Activated T-helper 1 cell treated with anti-CD3 and anti-CD28 coated beads, Interleukin-12 subunit alpha, Interleukin-12 subunit beta, Interleukin-2, Interleukin-4 antibody, amounts not matched to agents 30 ng/mL and 10 ng/mL and 1 ng/mL, durations not matched to agents 14 hours and 24 hours and 36 hours (primary cell): ENCODE measurements at regions of chr2 and their contacts with region 1.

Region 1: DNA sequence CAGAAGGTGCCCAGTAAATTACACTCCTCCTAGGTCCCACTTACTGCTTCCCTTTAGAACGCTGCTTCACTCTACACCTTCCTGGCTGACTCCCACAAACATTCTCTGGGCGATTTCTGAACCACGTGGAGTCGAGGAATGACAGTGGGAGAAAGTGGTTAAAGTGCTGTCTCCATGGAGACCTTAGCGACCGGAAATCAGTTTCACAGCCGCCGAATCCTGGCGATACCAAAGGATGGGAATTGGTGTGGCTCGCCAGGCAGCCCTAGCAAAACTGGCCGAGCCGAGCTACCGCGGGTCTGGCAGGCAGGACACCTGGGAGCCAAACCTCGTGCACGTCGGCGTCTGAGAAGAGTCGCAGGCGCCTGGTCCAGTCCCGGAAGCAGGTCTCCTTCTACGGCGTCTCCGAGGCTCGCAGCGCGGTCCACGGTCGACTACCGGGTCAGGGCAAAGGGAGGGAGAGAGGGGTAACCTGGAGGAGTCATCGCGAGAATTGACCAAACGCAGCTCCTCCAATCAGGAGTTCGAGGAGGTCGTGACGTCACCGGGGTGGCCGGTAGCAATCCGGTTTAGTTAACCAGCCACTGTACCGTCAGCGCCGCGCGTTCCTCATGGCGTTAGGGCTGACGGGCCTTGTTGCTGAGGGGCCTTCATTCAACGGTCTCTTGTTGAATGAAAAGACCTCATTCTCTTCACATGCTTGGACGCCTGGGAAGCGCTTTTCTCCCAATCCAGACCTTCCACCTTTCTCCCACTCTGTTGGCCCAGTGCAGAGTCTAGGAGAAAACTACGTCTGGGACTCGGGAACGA is at the start of gene THADA:
- DNase-seq: peak; percentile 97
- H3K4me3 Mint-ChIP-seq: peak within 1 kb of the TSS; percentile 96
- H3K27ac Mint-ChIP-seq: peak within 1 kb of the TSS; percentile 98
- H3K4me1 Mint-ChIP-seq: peaks cover 42% of the 10 kb centered on the region
- H3K27me3 Mint-ChIP-seq: peaks cover 2% of the 10 kb centered on the region
- total RNA-seq, gene THADA: 49.8 and 51.7 TPM in 2 replicates

Region 2: GRCh38 chr2:43255296-43255910 is 340.4 kb before region 1 on chr2:
- intact Hi-C with region 1: no loop called
- DNase-seq: no peak
- H3K4me3 Mint-ChIP-seq: no peak overlapping the region
- H3K27ac Mint-ChIP-seq: no peak overlapping the region
- H3K4me1 Mint-ChIP-seq: no peaks in the 10 kb centered on the region
- H3K27me3 Mint-ChIP-seq: no peaks in the 10 kb centered on the region

Region 3: DNA sequence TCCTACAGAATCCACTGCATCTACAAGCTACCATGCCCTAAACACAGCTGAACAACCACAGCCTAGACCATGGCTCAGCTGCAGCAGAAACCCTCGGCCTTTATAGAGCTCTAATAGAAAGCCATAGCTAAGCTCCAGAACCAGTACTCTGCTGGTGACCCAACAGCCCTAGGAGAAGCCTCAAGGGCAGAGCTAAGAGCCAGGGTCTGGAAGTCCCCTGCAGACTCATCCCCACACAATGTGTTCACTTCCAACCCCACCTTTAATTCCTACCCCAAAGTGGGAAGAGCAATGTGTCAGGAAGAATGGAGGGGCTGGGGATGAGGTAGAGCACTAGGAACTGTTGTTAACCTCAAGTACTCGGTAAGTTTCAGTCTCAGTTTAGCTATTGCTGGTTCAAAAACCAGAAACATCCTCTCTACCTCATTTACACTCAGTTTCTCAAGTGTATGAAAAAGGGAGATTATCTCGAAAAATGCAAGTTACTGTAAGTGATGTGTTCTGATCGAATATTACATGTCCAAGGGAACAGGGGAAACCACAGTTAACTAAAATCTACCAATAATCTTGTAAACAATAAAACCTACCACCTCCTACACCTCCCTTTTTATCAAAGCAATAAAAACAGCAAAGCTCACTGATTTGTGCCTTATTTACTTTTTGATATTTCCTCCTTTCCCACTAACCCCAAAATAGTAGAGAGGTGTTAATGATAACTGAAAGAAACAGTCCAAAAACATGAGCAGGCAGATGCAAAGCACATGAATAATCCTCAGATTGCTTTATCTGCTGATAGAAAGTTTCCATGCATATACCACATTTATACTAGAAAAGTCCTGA is 36.2 kb before region 1 on chr2:
- intact Hi-C with region 1: loop called (anchors 1 kb)
- DNase-seq: no peak
- H3K4me3 Mint-ChIP-seq: peak overlapping the region; percentile 41
- H3K27ac Mint-ChIP-seq: peak overlapping the region; percentile 94
- H3K4me1 Mint-ChIP-seq: peaks cover 71% of the 10 kb centered on the region
- H3K27me3 Mint-ChIP-seq: no peaks in the 10 kb centered on the region

Region 4: DNA sequence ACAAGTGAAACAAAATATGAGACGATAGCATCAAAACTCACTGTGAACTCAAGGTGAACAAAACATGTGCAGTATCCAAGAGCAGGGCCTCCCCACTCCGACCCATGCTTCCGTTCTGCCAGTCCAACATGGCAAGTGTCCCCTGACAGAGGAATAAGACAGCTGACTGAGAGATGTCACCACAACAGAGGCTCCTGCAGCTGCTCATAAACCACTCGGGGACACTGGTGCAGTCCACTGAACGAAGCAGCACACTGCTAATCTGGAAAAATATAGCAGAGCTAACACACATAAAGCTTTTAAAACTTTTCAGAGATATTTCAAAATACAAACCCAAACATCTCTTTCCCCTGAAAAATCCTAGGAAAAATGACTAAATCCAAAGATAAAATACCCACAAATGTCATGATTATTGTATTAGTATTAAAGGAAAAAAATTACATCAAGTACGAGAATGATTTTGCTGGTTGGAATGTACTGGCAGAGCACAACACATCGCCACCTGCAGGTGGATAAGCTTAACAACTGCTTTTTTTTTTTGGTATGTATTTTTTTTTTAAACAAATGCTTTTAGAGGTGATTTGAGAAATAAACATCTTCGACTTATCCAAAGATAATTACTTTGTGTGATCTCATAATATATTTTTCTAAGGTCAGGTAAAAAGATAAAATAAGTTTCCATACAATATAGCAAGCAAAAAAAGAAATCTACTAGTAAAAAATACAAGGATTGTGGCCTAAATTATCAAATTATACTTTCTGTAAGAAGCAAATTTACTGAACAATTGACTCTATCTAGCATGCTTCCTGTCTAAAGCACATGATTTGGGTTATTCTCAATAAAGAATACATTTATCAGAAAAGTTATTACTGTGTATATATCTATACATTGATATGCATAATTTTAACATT is 18.6 kb before region 1 on chr2:
- intact Hi-C with region 1: loop called (anchors 1 kb)
- DNase-seq: no peak
- H3K4me3 Mint-ChIP-seq: no peak overlapping the region
- H3K27ac Mint-ChIP-seq: no peak overlapping the region
- H3K4me1 Mint-ChIP-seq: peaks cover 27% of the 10 kb centered on the region
- H3K27me3 Mint-ChIP-seq: no peaks in the 10 kb centered on the region

Region 5: GRCh38 chr2:43637030-43637803 is 41.4 kb after region 1 on chr2 and contains the start of gene PLEKHH2:
- intact Hi-C with region 1: loop called (anchors 1 kb)
- DNase-seq: peak; percentile 81
- H3K4me3 Mint-ChIP-seq: peak within 1 kb of the TSS; percentile 84
- H3K27ac Mint-ChIP-seq: no peak within 1 kb of the TSS
- H3K4me1 Mint-ChIP-seq: peaks cover 6% of the 10 kb centered on the region
- H3K27me3 Mint-ChIP-seq: peaks cover 45% of the 10 kb centered on the region
- total RNA-seq, gene PLEKHH2: 0.12 and 0.13 TPM in 2 replicates

Region 6: DNA sequence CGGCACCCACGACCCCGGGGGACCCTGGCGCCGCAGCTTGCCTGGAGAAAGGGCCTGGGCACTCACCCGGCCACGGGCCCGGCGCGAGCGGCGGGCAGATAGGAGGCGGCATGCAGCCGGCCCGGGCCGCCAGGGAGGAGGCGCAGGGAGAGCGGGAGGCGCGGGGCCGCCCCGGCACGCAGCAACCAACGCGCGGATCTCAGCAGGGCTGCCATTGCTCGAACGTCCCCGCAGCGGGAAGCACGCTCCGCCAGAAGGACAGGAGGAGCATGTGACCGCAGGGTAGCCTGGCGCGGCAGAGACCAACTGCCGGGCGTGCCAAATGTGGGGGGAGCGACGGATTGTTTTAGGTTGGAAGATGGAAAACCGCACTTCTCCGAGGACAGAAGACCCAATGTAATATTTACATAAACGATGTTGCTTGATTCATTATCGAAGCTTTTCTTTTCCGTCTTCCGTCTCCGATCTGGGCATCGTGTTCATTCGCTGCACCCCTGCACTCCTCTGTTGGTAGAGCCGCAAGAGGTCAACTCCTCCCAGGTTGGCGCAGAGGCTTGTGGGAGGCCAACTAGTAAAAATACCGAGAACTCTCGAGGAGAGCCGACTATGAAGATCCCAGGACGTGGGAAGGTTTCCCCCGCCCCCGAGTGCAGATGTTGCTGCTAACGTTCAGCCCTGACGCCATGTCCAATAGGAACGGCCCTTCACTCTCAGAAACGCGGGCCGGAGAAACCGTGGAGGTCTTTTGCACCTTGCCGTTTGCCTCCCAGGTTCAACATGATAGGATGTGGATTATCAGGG is 400.1 kb after region 1 on chr2 and contains the start of gene LRPPRC:
- intact Hi-C with region 1: loop called (anchors 5 kb)
- DNase-seq: peak; percentile 85
- H3K4me3 Mint-ChIP-seq: peak within 1 kb of the TSS; percentile 95
- H3K27ac Mint-ChIP-seq: peak within 1 kb of the TSS; percentile 94
- H3K4me1 Mint-ChIP-seq: peaks cover 45% of the 10 kb centered on the region
- H3K27me3 Mint-ChIP-seq: peaks cover 2% of the 10 kb centered on the region
- total RNA-seq, gene LRPPRC: 150 and 162 TPM in 2 replicates